Activated CD8-positive, alpha-beta T cell treated with anti-CD3 and anti-CD28 coated beads for 36 hours (primary cell): ENCODE measurements at regions of chr19 and their contacts with region 1.

Region 1: DNA sequence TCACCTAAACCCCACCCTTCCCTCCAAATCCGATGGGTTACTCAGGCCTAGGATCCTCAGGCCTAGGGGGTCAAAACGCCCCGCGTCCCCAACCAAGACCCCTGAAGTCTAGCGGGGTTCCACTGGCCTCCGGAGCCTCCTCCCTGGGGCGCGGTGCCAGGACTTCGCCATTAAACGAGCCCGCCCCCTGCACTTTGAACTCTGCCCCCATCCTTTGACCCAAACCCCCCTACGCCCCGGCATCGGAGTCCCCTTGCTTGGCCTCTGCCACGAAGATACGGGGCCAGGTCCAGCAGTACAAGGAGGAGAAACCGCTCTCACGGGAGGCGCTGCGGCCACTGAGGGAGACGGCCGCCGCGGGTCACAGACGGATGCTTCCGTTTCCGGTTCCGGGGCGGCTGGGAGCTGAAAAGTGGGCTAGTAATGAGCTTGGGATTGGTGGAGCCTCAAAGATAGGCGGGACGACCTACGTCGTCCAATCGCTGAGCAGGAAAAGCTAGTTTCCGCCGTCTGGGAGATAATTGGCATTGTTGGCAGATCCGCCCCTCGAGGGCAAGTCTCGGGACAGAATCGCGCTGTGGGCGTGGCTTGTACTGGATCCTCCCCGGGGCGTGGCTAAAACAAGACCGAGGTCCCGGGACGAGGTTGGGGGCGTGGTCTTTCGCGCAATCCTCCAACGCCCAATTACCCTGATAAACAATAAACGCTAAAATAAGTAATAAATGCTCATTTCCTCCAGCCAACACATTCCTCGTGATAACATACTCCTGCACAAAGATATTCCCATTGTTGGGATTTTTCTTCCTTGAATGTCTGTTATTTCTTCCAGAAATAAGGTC is 5.7 kb upstream of the ZNF77 start:
- DNase-seq: peak; percentile 100
- ATAC-seq: peak; percentile 96
- H3K4me3 Mint-ChIP-seq: peak overlapping the region; percentile 92
- H3K27ac Mint-ChIP-seq: peak overlapping the region; percentile 96
- H3K4me1 Mint-ChIP-seq: peaks cover 21% of the 10 kb centered on the region
- H3K27me3 Mint-ChIP-seq: no peaks in the 10 kb centered on the region
- CTCF ChIP-seq: no peak

Region 2: DNA sequence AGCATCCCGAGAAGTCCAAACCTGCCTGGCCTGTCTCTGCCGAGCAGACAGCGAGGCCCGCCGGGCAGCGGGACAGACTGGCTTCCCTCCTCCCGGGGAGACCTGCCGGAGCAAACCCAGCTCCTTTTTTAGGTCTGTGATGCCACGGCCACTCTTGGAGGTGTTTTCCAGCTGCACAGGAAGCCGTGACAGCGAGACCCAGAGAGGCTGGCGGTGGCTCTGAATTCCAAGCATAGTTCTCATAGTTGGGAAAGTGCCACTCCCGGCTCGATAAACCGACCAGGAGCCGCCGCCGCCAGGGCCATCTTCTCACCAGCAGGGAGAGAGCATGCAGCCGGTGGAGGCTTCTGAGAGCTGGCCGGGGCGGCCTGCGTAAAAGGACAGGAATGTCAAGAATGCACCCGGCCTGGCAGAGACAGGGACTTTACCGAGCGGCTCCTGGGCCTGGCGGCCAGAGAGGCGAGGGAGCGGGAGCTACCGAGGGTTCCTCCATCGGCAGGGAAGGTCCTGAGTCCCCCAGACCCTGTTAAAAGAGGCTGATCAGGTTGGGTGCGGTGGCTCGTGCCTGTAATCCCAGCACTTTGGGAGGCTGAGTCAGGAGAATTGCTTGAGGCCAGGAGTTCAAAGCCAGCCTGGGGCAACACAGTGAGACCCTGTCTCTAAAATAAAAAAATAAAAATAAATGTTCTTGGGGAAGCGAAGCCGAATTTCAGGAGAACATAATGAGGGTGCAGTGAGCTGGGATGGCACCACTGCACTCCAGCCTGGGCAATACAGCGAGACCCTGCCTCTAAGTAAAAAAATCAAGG is 409.7 kb before region 1 on chr19:
- CTCF ChIA-PET with region 1: no interaction called
- POLR2A ChIA-PET with region 1: no interaction called
- intact Hi-C with region 1: no loop called
- DNase-seq: no peak
- ATAC-seq: no peak
- H3K4me3 Mint-ChIP-seq: no peak overlapping the region
- H3K27ac Mint-ChIP-seq: no peak overlapping the region
- H3K4me1 Mint-ChIP-seq: peaks cover 28% of the 10 kb centered on the region
- H3K27me3 Mint-ChIP-seq: no peaks in the 10 kb centered on the region
- CTCF ChIP-seq: no peak

Region 3: GRCh38 chr19:2867025-2867991 is 83.2 kb before region 1 on chr19 and contains the start of gene ZNF556:
- CTCF ChIA-PET with region 1: no interaction called
- POLR2A ChIA-PET with region 1: no interaction called
- intact Hi-C with region 1: no loop called
- DNase-seq: peak; percentile 26
- ATAC-seq: peak; percentile 71
- H3K4me3 Mint-ChIP-seq: no peak within 1 kb of the TSS
- H3K27ac Mint-ChIP-seq: no peak within 1 kb of the TSS
- H3K4me1 Mint-ChIP-seq: no peaks in the 10 kb centered on the region
- H3K27me3 Mint-ChIP-seq: peaks cover 2% of the 10 kb centered on the region
- CTCF ChIP-seq: no peak
- total RNA-seq, gene ZNF556: not detected

Region 4: DNA sequence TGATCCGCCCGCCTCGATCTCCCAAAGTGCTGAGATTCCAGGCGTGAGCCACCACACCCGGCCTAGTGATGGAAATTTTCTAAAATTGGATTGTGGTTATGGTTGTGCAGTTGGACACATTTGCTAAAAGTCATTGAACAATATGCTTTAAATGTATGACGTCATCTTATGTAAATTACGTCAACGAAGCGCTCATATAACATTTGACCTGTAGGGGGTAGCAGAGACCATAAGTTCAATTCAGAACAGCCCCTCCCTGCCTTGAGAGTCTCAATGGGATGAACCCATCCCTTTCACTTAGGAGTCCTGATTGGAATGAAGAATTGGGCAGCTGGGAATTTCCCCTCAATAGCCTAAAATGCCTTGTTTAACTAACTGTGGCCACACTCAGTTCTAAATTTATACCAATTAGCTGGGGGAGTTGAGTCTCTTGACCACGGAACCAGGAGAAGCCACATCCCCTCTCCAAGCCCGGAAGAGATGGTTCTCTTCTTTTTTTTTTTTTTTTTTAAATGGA is 11.6 kb after region 1 on chr19:
- CTCF ChIA-PET with region 1: interaction called, 14 read pairs
- POLR2A ChIA-PET with region 1: no interaction called
- intact Hi-C with region 1: no loop called
- DNase-seq: peak; percentile 65
- ATAC-seq: peak; percentile 84
- H3K4me3 Mint-ChIP-seq: no peak overlapping the region
- H3K27ac Mint-ChIP-seq: no peak overlapping the region
- H3K4me1 Mint-ChIP-seq: peaks cover 3% of the 10 kb centered on the region
- H3K27me3 Mint-ChIP-seq: no peaks in the 10 kb centered on the region
- CTCF ChIP-seq: peak; percentile 81

Region 5: DNA sequence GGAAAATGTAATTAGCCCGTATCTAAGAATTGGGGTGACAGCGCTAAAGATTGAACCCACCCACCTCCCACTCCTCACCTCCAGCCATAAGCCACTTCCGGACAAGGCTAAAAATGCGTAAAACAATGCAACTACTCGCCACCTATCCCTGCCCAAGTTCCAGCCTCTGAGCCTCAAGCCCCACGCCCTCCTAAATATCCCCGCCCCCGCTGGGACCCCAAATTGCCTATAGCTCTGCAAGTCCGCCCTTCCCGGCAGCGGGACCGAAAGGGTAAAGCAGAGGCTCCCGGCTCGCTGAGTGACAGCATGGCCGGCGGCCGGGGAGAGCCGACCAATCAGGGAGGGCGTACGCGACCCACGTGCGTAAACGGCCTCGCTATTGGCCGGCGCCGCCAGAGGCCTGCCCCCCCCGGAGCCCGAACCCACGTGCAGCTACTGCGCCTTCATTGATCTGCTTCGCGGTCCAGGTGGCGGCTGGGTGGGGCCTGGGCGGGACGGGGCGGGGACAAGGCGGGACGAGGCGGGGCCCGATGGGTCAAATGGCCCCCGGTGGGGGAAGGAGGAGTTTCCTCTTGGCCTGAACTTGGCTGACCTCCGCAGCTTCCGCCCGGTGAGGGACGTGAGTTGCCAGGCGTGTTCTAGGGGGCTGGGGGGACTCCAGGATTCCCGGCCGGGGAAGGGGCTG is 26.6 kb after region 1 on chr19 and contains the start of gene TLE6:
- CTCF ChIA-PET with region 1: interaction called, 22 read pairs
- POLR2A ChIA-PET with region 1: no interaction called
- intact Hi-C with region 1: no loop called
- DNase-seq: peak; percentile 97
- ATAC-seq: peak; percentile 99
- H3K4me3 Mint-ChIP-seq: peak within 1 kb of the TSS; percentile 82
- H3K27ac Mint-ChIP-seq: peak within 1 kb of the TSS; percentile 83
- H3K4me1 Mint-ChIP-seq: peaks cover 18% of the 10 kb centered on the region
- H3K27me3 Mint-ChIP-seq: peaks cover 5% of the 10 kb centered on the region
- CTCF ChIP-seq: no peak
- total RNA-seq, gene TLE6: 3.5 to 5.1 TPM

Region 6: DNA sequence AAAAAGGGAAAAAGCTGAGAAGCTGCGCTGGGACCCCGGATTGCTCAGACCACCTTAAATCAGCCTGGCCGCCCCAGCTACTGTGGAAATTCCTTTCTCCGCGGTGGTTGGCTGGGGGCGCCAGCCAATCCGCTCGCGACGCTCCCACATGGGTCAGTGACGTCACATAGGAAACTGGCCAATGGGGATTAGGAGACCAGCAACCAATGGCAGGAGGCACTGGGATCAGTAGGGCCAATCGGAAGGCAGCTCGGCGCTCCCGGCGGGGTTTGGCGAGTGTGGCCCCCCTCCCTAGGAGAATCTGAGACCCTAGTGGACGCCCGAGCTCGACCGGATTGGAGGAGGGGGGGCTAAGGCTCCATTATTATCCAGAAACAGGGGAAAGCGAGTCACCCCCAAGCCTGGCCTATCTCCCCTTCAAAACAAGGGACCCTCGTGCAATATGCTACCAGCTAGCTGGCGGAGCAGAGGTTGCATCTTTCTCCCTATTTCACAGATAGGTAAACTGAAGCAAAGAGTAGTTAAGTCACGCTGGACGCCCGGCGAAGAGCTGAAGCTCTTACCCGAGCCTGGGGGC is 85.1 kb after region 1 on chr19:
- CTCF ChIA-PET with region 1: interaction called, 24 read pairs
- POLR2A ChIA-PET with region 1: no interaction called
- intact Hi-C with region 1: no loop called
- DNase-seq: peak; percentile 98
- ATAC-seq: peak; percentile 95
- H3K4me3 Mint-ChIP-seq: peak overlapping the region; percentile 85
- H3K27ac Mint-ChIP-seq: peak overlapping the region; percentile 94
- H3K4me1 Mint-ChIP-seq: peaks cover 21% of the 10 kb centered on the region
- H3K27me3 Mint-ChIP-seq: peaks cover 1% of the 10 kb centered on the region
- CTCF ChIP-seq: no peak

Region 7: GRCh38 chr19:3075895-3076431 is 125.5 kb after region 1 on chr19:
- CTCF ChIA-PET with region 1: interaction called, 20 read pairs
- POLR2A ChIA-PET with region 1: no interaction called
- intact Hi-C with region 1: no loop called
- DNase-seq: peak; percentile 83
- ATAC-seq: peak; percentile 94
- H3K4me3 Mint-ChIP-seq: no peak overlapping the region
- H3K27ac Mint-ChIP-seq: no peak overlapping the region
- H3K4me1 Mint-ChIP-seq: peaks cover 2% of the 10 kb centered on the region
- H3K27me3 Mint-ChIP-seq: no peaks in the 10 kb centered on the region
- CTCF ChIP-seq: peak; percentile 86

Region 8: GRCh38 chr19:3108775-3109174 is 158.3 kb after region 1 on chr19:
- CTCF ChIA-PET with region 1: interaction called, 52 read pairs
- POLR2A ChIA-PET with region 1: interaction called, 3 read pairs
- intact Hi-C with region 1: no loop called
- DNase-seq: peak; percentile 85
- ATAC-seq: peak; percentile 83
- H3K4me3 Mint-ChIP-seq: no peak overlapping the region
- H3K27ac Mint-ChIP-seq: peak overlapping the region; percentile 61
- H3K4me1 Mint-ChIP-seq: peaks cover 8% of the 10 kb centered on the region
- H3K27me3 Mint-ChIP-seq: no peaks in the 10 kb centered on the region
- CTCF ChIP-seq: peak; percentile 94